PC-3 (cell line): ENCODE measurements at regions of chr4 and their contacts with region 1.

Region 1: GRCh38 chr4:55948726-55949474 is at the start of gene CEP135:
- DNase-seq: peak; percentile 96
- ATAC-seq: peak; percentile 76
- H3K4me3 ChIP-seq: peak within 1 kb of the TSS; percentile 81
- H3K27ac ChIP-seq: peak within 1 kb of the TSS; percentile 93
- H3K4me1 ChIP-seq: peaks cover 30% of the 10 kb centered on the region
- H3K27me3 ChIP-seq: no peaks in the 10 kb centered on the region
- CTCF ChIP-seq: peak; percentile 97
- total RNA-seq, gene CEP135: 14.8 and 19.1 TPM in 2 replicates

Region 2: GRCh38 chr4:55546756-55547465 is 402.0 kb before region 1 on chr4 and contains the start of gene CLOCK:
- CTCF ChIA-PET with region 1: no interaction called
- POLR2A ChIA-PET with region 1: interaction called, 23 read pairs
- intact Hi-C with region 1: no loop called
- DNase-seq: peak; percentile 87
- ATAC-seq: peak; percentile 49
- H3K4me3 ChIP-seq: peak within 1 kb of the TSS; percentile 86
- H3K27ac ChIP-seq: peak within 1 kb of the TSS; percentile 85
- H3K4me1 ChIP-seq: peaks cover 60% of the 10 kb centered on the region
- H3K27me3 ChIP-seq: no peaks in the 10 kb centered on the region
- CTCF ChIP-seq: peak; percentile 59
- total RNA-seq, gene CLOCK: 36.3 and 39.7 TPM in 2 replicates

Region 3: GRCh38 chr4:55853484-55854046 is 95.3 kb before region 1 on chr4 and contains the start of gene EXOC1:
- CTCF ChIA-PET with region 1: no interaction called
- POLR2A ChIA-PET with region 1: no interaction called
- intact Hi-C with region 1: loop called (anchors 1 kb)
- DNase-seq: peak; percentile 99
- ATAC-seq: peak; percentile 95
- H3K4me3 ChIP-seq: peak within 1 kb of the TSS; percentile 84
- H3K27ac ChIP-seq: peak within 1 kb of the TSS; percentile 13
- H3K4me1 ChIP-seq: peaks cover 17% of the 10 kb centered on the region
- H3K27me3 ChIP-seq: no peaks in the 10 kb centered on the region
- CTCF ChIP-seq: no peak
- total RNA-seq, gene EXOC1: 23.7 and 37.4 TPM in 2 replicates

Region 4: GRCh38 chr4:55906999-55907398 is 41.9 kb before region 1 on chr4:
- CTCF ChIA-PET with region 1: no interaction called
- POLR2A ChIA-PET with region 1: interaction called, 8 read pairs
- intact Hi-C with region 1: loop called (anchors 1 kb)
- DNase-seq: peak; percentile 97
- ATAC-seq: peak; percentile 97
- H3K4me3 ChIP-seq: no peak overlapping the region
- H3K27ac ChIP-seq: peak overlapping the region; percentile 25
- H3K4me1 ChIP-seq: peaks cover 17% of the 10 kb centered on the region
- H3K27me3 ChIP-seq: no peaks in the 10 kb centered on the region
- CTCF ChIP-seq: no peak

Region 5: DNA sequence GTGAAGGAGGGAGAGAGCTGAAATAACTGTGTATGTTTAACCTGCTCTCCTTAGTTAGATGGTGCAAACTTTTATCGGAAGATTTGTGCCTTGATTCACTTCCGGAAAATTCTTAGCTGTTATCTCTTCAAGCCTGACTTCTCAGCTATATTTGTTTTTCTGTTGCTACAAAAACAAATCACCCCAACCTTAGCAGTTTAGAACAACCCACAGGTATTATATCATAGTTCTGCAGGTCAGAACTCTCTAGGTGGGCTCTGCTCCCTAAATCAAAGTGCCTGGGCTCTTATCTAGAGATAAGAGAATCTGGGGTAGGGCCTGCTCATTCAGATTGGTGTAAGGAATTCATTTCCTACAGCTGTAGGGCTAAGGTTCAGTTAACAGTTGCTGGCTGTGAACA is 15.3 kb before region 1 on chr4:
- CTCF ChIA-PET with region 1: no interaction called
- POLR2A ChIA-PET with region 1: interaction called, 14 read pairs
- intact Hi-C with region 1: no loop called
- DNase-seq: no peak
- ATAC-seq: no peak
- H3K4me3 ChIP-seq: no peak overlapping the region
- H3K27ac ChIP-seq: no peak overlapping the region
- H3K4me1 ChIP-seq: no peaks in the 10 kb centered on the region
- H3K27me3 ChIP-seq: no peaks in the 10 kb centered on the region
- CTCF ChIP-seq: no peak

Region 6: GRCh38 chr4:56048702-56049431 is 100.0 kb after region 1 on chr4:
- CTCF ChIA-PET with region 1: no interaction called
- POLR2A ChIA-PET with region 1: no interaction called
- intact Hi-C with region 1: loop called (anchors 5 kb)
- DNase-seq: peak; percentile 61
- ATAC-seq: peak; percentile 92
- H3K4me3 ChIP-seq: peak overlapping the region; percentile 79
- H3K27ac ChIP-seq: no peak overlapping the region
- H3K4me1 ChIP-seq: peaks cover 7% of the 10 kb centered on the region; the same call in 1 of the 2 replicates
- H3K27me3 ChIP-seq: peaks cover 32% of the 10 kb centered on the region
- CTCF ChIP-seq: peak; percentile 24; the same call in 1 of the 2 replicates

Region 7: GRCh38 chr4:56118055-56118454 is 169.2 kb after region 1 on chr4:
- CTCF ChIA-PET with region 1: no interaction called
- POLR2A ChIA-PET with region 1: no interaction called
- intact Hi-C with region 1: no loop called
- DNase-seq: no peak
- ATAC-seq: no peak
- H3K4me3 ChIP-seq: no peak overlapping the region
- H3K27ac ChIP-seq: no peak overlapping the region
- H3K4me1 ChIP-seq: no peaks in the 10 kb centered on the region
- H3K27me3 ChIP-seq: peaks cover 19% of the 10 kb centered on the region
- CTCF ChIP-seq: no peak

Region 8: DNA sequence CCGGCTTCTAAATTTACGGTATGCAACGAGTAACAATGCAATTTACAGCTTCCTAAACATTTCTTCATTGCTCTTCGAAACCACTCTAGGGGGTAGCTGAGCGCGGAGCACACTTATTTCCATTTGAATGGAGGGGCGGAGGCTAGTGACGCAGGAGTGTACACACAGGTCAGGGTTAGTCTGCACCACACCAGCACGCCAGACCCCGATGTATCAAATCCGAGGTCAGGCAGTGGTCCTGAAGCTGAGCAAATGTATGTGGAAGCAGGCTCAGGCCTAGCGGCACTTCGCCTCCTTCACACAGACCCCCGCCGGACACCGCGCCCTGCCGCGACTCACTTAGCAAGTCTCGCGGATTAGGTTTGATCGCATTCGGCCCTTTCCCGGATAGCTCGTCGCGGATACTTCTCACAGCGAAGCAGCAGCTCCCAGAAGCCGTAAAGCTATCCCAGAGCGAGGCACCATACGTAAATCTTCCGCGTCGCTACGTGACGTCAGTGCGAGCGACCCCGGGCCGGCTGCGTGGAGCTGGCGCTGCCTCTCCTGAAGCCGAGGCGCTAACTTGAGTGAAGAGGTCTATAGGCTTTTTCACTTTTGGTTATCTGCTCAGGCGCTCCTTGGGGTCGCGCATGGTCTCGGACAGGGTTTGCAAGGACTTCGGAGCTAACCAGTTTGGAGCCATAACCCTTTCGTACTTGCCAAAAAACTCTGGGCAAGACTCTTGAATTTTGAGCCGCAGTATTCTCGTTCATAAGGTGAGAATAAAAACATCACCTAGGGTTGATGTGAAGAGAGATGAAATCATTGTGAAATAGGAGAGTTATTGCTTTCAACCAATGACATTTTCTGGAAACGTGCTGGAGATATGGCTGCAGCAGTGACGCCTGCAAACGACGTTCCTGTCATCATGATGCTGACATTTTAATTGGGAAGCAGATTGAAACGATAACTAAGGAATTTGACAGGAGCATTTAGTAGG is 438.4 kb after region 1 on chr4 and contains the start of gene AASDH:
- CTCF ChIA-PET with region 1: interaction called, 3 read pairs
- POLR2A ChIA-PET with region 1: no interaction called
- intact Hi-C with region 1: loop called (anchors 10 kb)
- DNase-seq: peak; percentile 98
- ATAC-seq: peak; percentile 90
- H3K4me3 ChIP-seq: peak within 1 kb of the TSS; percentile 88
- H3K27ac ChIP-seq: peak within 1 kb of the TSS; percentile 86
- H3K4me1 ChIP-seq: peaks cover 21% of the 10 kb centered on the region
- H3K27me3 ChIP-seq: no peaks in the 10 kb centered on the region
- CTCF ChIP-seq: no peak
- total RNA-seq, gene AASDH: 7.5 and 8.8 TPM in 2 replicates